Posterior cingulate gyrus (tissue), 11 donors: ENCODE measurements at regions of chr4 and their contacts with region 1.

Region 1: DNA sequence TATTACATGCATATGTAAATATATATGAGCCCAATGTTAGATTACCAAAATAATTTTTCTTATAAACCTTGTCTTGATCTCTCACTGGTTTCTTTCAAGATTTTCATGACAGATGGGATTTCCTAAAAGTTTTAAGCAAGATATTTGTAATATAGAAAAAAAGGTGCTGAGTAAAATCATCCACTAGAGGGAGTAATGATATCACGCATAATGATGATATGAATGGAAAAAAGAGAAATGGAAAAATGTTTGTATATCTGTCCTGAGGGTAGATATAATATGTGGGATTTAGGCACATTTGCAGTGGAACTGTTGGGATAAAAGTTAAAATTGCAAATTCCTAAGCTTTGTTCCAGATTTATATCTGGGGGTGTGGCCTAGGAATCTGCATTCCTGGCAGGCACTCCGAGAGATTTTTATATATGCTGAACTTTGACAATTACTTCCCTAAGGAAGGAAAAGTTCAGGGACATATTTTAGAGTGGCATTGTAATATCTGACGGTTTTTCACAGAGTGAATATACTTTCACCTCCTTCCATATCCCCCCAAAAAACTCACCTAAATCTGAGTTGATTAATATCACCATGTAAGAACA is 60.5 kb downstream of the TMA16 start:
- DNase-seq: no peak

Region 2: GRCh38 chr4:163665521-163666331 is 110.8 kb after region 1 on chr4:
- intact Hi-C with region 1: loop called (anchors 5 kb)
- DNase-seq: no peak

Region 3: DNA sequence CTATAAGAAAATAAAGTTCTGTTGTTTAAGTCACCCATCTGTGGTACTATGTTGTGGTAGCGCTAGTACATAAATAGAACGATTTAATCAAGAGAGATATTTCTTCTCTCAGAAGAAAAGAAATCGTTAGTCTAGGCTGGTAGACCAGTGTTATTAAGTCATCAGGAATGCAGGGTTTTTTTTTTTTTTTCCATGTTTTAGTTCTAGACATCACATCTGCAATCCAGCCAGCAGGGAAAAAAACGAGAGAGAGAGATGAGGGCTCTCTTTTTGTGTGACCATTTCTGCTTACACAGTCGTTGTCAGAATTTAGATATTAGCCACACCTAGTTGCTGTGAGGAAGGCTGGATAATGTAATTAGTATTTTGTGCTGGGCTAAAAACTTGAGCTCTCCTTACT is 356.9 kb after region 1 on chr4:
- intact Hi-C with region 1: loop called (anchors 10 kb)
- DNase-seq: no peak

Region 4: DNA sequence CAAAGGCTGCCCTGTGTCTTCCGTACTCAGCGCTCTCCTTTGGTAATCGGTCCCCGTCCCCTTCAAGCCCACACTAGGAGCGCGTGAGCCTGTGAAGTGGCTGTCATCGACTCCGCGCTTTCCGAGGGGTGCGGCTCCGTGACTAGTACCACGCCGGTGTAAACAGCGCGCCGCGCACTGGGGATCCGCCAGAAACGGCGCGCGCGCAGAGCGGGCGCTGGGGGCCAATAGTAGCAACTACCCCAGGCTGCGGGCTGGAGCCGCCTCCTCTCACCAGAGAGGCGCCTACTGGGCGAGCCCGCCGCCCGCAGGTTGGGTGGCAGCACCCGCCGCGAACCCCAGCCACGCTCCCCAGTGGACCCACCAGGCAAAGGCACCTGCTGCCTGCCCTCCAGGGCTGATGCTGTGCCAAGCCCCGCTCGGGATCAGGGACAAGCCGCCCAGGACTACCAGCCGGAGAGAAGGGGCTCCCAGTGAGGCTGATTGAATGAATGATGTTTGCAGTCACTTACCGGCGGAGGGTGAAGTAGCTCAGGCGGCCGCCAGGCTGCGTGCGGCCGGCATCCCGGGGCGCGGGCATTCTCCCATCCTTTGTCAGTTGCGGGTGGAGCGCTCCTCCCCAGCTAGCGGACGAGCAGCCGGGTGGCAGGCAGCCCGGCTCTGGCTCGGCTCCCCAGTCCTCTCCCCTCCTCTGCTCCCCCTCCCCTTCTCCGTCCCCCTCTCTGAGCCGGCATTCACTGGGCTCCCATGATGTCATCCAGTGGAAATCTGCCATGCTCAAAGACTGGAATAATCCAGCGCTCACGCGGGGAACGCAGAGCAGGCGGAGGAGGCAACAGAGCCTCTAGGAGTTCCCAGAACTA is 828.6 kb after region 1 on chr4:
- intact Hi-C with region 1: loop called (anchors 10 kb)
- DNase-seq: peak; percentile 77 to 99 (median 92)

Region 5: GRCh38 chr4:164748375-164748774 is 1193.4 kb after region 1 on chr4:
- intact Hi-C with region 1: loop called (anchors 5 kb)
- DNase-seq: no peak